HAP-1 (cell line): ENCODE measurements at regions of chr9 and their contacts with region 1.

Region 1: GRCh38 chr9:124771021-124771866 is at the start of gene NR6A1:
- DNase-seq: peak; percentile 94 to 98
- H3K4me3 ChIP-seq: peak within 1 kb of the TSS; percentile 59
- H3K4me1 ChIP-seq: peaks cover 9% of the 10 kb centered on the region
- H3K27me3 ChIP-seq: no peaks in the 10 kb centered on the region

Region 2: GRCh38 chr9:124658165-124659017 is 112.9 kb before region 1 on chr9:
- in situ Hi-C with region 1: no loop called
- DNase-seq: peak; percentile 89 to 98
- H3K4me3 ChIP-seq: peak overlapping the region; percentile 45
- H3K4me1 ChIP-seq: peaks cover 16% of the 10 kb centered on the region
- H3K27me3 ChIP-seq: no peaks in the 10 kb centered on the region

Region 3: GRCh38 chr9:124818431-124819281 is 47.4 kb after region 1 on chr9:
- in situ Hi-C with region 1: no loop called
- DNase-seq: no peak
- H3K4me3 ChIP-seq: no peak overlapping the region
- H3K4me1 ChIP-seq: no peaks in the 10 kb centered on the region
- H3K27me3 ChIP-seq: no peaks in the 10 kb centered on the region

Region 4: GRCh38 chr9:124852829-124853531 is 81.7 kb after region 1 on chr9 and contains the start of gene WDR38:
- in situ Hi-C with region 1: loop called (anchors 5 kb)
- DNase-seq: peak; percentile 65 to 83
- H3K4me3 ChIP-seq: peak within 1 kb of the TSS; percentile 40
- H3K4me1 ChIP-seq: peaks cover 8% of the 10 kb centered on the region
- H3K27me3 ChIP-seq: no peaks in the 10 kb centered on the region

Region 5: DNA sequence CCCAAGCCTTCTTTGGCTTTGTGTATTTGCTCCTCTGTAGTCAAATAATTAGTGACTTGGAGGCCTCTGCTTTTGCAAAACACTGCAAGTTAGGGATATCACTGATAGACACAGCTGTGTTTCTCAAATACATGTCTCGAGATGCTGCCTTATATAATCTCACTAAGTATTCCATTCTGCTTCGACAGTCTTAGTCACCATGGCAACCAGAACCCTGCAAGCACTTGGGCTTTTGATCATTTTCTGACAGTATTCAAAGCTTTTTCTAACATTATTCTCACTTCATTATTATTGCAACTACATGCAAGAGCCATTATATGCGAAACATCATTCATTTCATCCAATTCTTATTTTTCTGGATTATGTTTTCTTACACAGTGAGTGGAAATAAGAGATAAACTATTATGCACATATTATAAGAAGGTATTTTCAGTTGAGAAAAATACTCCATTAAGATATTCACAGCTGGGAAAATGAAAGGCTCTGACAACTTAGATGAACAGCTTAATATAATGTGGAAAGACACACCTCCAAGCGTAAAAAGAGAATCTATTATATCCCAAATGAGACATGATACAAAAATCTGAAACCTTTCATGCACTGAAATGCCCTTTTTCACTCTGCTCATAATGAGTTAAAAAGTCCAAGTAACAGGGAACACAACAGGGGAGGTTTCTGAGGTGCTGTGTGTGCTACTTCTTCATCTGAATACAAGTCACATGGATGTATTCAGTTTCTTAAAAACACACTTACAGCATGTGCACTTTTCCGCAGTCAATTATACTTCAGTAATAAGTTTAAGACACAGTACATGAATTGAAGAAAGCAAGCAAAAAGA is 278.2 kb after region 1 on chr9:
- in situ Hi-C with region 1: no loop called
- DNase-seq: peak; percentile 59 to 87
- H3K4me3 ChIP-seq: no peak overlapping the region
- H3K4me1 ChIP-seq: peaks cover 14% of the 10 kb centered on the region
- H3K27me3 ChIP-seq: no peaks in the 10 kb centered on the region

Region 6: GRCh38 chr9:125143375-125144090 is 372.3 kb after region 1 on chr9 and contains the start of gene SCAI:
- in situ Hi-C with region 1: loop called (anchors 5 kb)
- DNase-seq: peak; percentile 99
- H3K4me3 ChIP-seq: peak within 1 kb of the TSS; percentile 46
- H3K4me1 ChIP-seq: peaks cover 11% of the 10 kb centered on the region
- H3K27me3 ChIP-seq: no peaks in the 10 kb centered on the region

Region 7: DNA sequence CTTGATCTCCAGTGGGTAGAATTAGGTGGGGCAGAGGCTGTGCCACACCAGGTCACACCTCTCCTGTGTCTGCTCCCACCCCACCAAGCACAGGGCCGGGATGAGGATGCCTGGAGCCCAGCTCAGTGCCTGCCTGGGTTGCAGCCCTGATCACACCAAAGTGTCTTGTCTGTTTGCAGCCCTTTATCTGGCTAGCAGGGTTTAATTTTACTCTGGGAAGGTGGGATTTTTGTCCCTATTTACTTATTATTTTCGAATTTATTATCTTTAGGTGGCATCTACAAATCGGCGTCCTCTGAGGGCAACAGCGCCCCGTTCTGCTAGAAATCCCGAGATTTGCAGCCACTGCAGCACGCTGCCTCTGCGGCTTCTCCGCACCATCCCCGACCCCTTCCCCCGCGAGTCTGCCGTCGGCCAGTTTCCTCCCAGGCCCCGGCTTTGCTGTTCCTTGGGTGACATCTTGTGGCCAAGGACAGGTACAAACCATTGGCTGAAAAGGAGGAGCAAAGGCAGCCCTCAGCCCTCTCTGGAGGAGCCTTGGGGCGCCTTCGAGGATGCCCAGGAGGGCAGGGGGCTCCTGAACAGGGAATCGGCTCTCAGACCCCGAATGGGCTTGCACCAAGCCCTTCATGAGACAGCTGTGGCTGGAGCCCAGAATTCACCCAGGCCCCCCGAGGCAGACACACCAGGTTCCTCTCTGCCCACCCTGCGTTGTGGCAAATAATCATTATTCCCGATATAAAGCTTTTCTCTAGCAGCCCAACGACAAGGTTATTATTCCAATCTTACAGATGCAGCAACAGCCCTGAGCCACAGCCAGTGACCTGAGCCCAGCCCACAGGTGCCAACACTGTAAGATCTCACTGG is 603.4 kb after region 1 on chr9:
- in situ Hi-C with region 1: loop called (anchors 5 kb)
- DNase-seq: peak; percentile 78 to 88
- H3K4me3 ChIP-seq: peak overlapping the region; percentile 12; the same call in 1 of the 2 replicates
- H3K4me1 ChIP-seq: peaks cover 3% of the 10 kb centered on the region; the same call in 1 of the 2 replicates
- H3K27me3 ChIP-seq: no peaks in the 10 kb centered on the region